Naive thymus-derived CD4-positive, alpha-beta T cell (primary cell): ENCODE measurements at regions of chr6 and their contacts with region 1.

Region 1: DNA sequence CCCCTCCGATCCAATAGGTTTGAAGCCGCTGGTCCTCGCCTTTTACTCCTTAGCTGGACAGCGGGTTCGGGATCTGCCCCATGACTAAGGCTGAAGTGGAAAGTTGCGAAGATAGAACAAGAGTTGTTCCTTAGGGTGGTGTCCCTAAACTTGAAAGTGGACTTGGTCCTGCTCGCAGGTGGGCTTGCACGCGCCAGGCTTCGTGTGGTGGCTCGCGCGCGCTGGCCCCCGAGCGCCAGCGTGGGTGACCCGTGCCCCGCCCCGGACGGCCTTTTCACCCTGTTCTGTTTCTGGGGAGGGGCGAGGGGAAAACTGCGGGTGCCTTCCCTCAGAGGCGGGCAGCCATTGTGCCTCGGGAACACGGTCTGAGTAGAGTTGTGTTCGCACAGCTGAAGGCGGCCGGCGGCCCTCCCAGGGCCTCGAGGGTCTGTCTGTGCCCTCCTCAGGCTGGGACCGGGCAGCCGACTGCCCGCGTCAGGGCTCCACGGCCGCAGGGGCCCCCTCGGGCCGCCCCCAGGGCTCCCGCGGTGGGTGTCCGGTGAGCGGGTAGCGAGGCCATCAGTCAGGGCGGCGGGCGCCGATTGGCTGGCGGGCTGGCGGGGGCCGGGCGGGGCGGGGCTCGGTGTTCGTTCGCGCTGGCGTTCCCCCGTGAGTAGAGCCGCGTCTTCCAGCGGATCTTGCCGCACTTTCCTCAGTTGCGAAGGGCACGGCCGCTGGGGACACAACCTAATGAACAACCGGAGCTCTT is 33.0 kb downstream of the RREB1 start:
- DNase-seq: peak; percentile 69 to 86 (median 78)
- ATAC-seq: peak; percentile 89
- H3K4me3 ChIP-seq: peak overlapping the region; percentile 73
- H3K4me3 Mint-ChIP-seq: peak overlapping the region; percentile 80 to 92 (median 88)
- H3K27ac ChIP-seq: peak overlapping the region; percentile 91
- H3K27ac Mint-ChIP-seq: peak overlapping the region; percentile 85 to 99 (median 96)
- H3K4me1 ChIP-seq: peaks cover 22 to 51% of the 10 kb centered on the region in 2 donors
- H3K4me1 Mint-ChIP-seq: peaks cover 45 to 91% (median 85%) of the 10 kb centered on the region in 7 donors
- H3K27me3 ChIP-seq: no peaks in the 10 kb centered on the region
- H3K27me3 Mint-ChIP-seq: no peaks in the 10 kb centered on the region

Region 2: DNA sequence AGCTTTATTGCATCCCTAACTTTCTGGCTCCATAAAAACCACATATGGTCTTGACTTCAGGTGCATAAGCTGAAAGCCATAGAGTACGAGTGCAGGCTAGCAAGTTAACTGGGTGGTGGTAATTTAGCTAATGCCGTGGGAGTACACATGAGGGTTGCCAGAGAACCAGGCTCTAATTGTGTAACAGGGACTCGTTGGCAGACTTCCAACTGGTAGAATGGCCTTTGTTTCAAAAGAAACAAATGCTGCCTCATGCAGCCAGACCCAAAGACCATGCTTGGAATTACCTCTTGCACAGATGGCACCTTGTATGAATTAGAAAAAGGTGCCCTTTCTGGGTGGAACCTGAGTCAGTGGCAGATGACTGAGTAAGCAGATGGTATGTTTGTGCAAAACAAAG is 479.1 kb before region 1 on chr6:
- CTCF ChIA-PET with region 1: no interaction called
- POLR2A ChIA-PET with region 1: no interaction called
- intact Hi-C with region 1: loop called in 1 of 2 experiments (anchors 5 kb)
- DNase-seq: no peak
- ATAC-seq: no peak
- H3K4me3 ChIP-seq: no peak overlapping the region
- H3K4me3 Mint-ChIP-seq: peak overlapping the region in 1 of 10 donors; percentile 9
- H3K27ac ChIP-seq: no peak overlapping the region
- H3K27ac Mint-ChIP-seq: peak overlapping the region in 7 of 9 donors; percentile 40 to 99 (median 95)
- H3K4me1 ChIP-seq: peaks cover 0 to 43% of the 10 kb centered on the region in 2 donors
- H3K4me1 Mint-ChIP-seq: peaks cover 25 to 72% (median 65%) of the 10 kb centered on the region in 7 donors
- H3K27me3 ChIP-seq: no peaks in the 10 kb centered on the region
- H3K27me3 Mint-ChIP-seq: no peaks in the 10 kb centered on the region

Region 3: DNA sequence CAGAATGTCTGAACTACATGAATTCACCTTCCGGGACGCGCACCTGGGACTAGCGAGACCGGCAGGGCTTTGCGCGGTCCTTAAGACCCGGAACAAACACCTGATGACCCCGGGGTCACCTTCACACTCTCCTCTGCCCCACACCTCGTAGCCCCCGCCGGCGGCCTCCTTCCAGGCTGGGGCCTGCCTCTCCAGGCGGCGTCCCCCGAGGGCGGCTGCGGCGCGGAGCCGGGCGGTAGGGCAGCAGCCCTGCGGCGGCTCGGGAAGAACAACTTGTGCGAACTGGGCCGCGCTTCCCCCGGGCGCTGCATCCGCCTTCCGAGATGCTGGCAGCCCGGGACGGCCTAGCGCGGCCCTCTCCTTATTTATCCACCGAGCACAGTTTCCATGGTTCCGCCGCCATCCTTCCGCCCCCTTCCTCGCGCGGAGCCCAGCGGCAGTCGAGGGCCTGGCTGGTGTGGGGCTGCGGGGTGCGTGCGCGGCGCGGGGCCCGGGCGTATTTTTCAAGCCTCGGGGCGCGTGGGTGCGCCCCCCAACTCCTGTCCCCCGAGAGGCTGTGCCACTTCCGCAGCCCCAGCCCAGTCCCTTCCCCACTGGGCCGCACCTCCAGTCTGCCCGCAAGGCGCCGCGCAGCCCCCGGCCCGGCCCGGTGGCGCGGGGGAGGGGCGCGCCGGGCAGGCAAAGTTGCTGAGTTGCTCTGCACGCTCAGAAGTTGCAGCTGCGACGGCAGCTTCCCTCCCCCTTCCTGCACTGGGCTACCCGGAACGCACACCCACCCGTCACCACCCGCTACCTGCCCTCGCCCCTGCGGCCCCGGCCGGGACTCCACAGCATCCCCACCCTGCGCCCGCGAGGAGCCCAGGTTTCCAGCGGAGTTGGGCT is 89.3 kb before region 1 on chr6:
- CTCF ChIA-PET with region 1: no interaction called
- POLR2A ChIA-PET with region 1: interaction called, 5 read pairs
- intact Hi-C with region 1: loop called in 1 of 2 experiments (anchors 2 kb)
- DNase-seq: peak; percentile 34 to 81 (median 70)
- ATAC-seq: peak; percentile 83
- H3K4me3 ChIP-seq: peak overlapping the region; percentile 77
- H3K4me3 Mint-ChIP-seq: peak overlapping the region; percentile 20 to 89 (median 79)
- H3K27ac ChIP-seq: peak overlapping the region; percentile 59
- H3K27ac Mint-ChIP-seq: peak overlapping the region in 6 of 9 donors; percentile 69 to 86 (median 79)
- H3K4me1 ChIP-seq: peaks cover 0 to 4% of the 10 kb centered on the region in 2 donors
- H3K4me1 Mint-ChIP-seq: peaks cover 5 to 18% (median 11%) of the 10 kb centered on the region in 7 donors
- H3K27me3 ChIP-seq: no peaks in the 10 kb centered on the region
- H3K27me3 Mint-ChIP-seq: peaks cover 0 to 66% (median 0%) of the 10 kb centered on the region in 5 donors

Region 4: DNA sequence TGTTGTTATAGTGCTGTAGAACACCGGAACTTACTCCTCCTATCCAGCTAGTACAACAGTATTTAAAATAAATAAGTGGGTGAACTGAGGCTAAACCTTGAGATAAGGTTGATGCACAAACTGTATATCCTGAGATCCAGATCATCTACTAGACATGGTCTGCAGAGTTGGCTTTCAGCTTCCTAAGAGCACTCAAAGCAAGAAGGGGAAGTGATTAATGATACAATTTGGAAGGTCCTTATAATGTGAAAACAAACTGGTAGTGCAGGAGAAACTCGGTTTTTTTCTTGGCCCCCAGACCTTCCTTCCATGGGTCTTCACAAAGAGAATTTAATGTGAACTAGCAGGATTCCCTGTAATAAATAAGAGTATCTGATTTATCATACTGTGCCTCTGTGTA is 60.5 kb before region 1 on chr6:
- CTCF ChIA-PET with region 1: no interaction called
- POLR2A ChIA-PET with region 1: no interaction called
- intact Hi-C with region 1: no loop called
- DNase-seq: no peak
- ATAC-seq: no peak
- H3K4me3 ChIP-seq: no peak overlapping the region
- H3K4me3 Mint-ChIP-seq: no peak overlapping the region
- H3K27ac ChIP-seq: no peak overlapping the region
- H3K27ac Mint-ChIP-seq: no peak overlapping the region
- H3K4me1 ChIP-seq: peaks cover 0 to 4% of the 10 kb centered on the region in 2 donors
- H3K4me1 Mint-ChIP-seq: peaks cover 0 to 14% (median 7%) of the 10 kb centered on the region in 7 donors
- H3K27me3 ChIP-seq: no peaks in the 10 kb centered on the region
- H3K27me3 Mint-ChIP-seq: peaks cover 0 to 79% (median 0%) of the 10 kb centered on the region in 5 donors